Natural killer cell (primary cell): ENCODE measurements at regions of chr12 and their contacts with region 1.

Region 1: GRCh38 chr12:85920324-85920947 is 46.3 kb downstream of the NTS start:
- DNase-seq: peak in 1 of 2 donors; percentile 11
- ATAC-seq: peak in 1 of 3 donors; percentile 45
- H3K4me3 ChIP-seq: no peak overlapping the region
- H3K4me3 Mint-ChIP-seq: no peak overlapping the region
- H3K27ac ChIP-seq: no peak overlapping the region
- H3K27ac Mint-ChIP-seq: no peak overlapping the region
- H3K4me1 ChIP-seq: no peaks in the 10 kb centered on the region
- H3K4me1 Mint-ChIP-seq: no peaks in the 10 kb centered on the region
- H3K27me3 ChIP-seq: no peaks in the 10 kb centered on the region
- H3K27me3 Mint-ChIP-seq: no peaks in the 10 kb centered on the region
- CTCF ChIP-seq: peak; percentile 68

Region 2: DNA sequence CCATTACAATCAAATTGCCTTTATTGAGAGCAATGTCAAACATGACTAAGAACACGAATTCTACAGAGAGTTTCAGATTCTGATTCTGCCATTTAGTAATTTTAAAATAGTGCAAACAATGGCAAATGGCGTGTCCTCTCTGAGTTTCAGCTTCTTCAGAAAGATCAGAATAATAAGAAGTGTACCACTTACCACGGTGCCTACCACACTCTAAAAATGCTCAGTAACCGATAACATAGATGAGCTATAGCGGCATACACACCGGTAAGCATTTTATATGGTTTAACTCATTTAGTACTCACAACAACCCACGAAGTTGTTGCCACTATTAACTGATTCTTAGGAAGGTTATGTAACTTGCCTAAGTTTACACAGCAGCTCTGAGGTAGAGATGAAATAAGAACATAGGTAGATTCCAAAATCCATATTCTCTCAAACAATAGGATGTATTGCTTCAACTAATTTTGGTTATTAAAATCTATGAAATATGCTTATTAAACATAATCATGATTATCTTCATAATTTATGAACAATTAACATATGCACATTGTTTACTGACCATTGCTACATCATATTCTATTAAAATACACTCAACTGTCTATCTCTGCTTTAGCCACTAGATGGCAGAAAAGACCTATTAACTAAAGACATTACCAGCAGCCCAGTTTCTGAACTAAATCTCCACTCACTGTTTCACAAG is 1046.2 kb before region 1 on chr12:
- intact Hi-C with region 1: loop called (anchors 5 kb)
- DNase-seq: peak in 1 of 2 donors; percentile 51
- ATAC-seq: peak; percentile 46 to 64 (median 53)
- H3K4me3 ChIP-seq: no peak overlapping the region
- H3K4me3 Mint-ChIP-seq: no peak overlapping the region
- H3K27ac ChIP-seq: no peak overlapping the region
- H3K27ac Mint-ChIP-seq: no peak overlapping the region
- H3K4me1 ChIP-seq: no peaks in the 10 kb centered on the region
- H3K4me1 Mint-ChIP-seq: no peaks in the 10 kb centered on the region
- H3K27me3 ChIP-seq: no peaks in the 10 kb centered on the region
- H3K27me3 Mint-ChIP-seq: no peaks in the 10 kb centered on the region
- CTCF ChIP-seq: peak; percentile 72

Region 3: DNA sequence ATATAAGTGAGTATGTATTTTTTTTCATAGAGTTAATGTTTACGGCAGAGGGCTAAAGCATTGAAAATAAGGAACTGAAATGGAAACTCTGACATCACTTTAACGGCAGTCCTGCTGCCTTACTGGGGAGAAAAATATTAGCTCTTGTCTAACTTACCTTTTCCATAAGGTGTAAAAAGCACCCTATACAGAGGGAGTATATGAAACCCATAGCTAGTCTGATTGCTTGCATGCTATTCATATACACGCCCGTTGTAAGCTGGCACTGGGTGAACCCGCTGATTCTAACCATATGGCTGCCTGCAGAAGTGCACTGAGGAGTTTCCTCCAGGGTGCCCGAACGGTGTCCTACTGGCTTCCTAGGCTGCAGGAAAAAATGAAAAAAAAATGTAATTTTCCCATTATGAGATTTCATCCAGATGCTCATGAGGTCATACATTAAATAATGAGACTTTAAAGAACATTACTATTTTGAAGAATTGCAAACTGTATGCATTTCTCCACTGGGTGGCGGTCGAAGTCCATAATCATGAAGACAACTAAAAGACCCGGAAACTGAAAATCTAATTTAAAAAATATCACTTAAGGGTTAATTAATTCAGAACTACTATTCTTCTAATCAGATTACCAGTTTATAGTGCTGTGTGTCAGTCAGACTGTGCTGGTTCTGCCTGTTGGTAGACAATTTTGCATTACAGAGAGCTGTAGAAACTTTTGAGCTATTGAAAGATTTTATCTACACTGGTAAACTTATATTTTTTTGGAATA is 495.7 kb before region 1 on chr12:
- intact Hi-C with region 1: loop called (anchors 1 kb)
- DNase-seq: peak in 1 of 2 donors; percentile 4
- ATAC-seq: no peak
- H3K4me3 ChIP-seq: no peak overlapping the region
- H3K4me3 Mint-ChIP-seq: no peak overlapping the region
- H3K27ac ChIP-seq: no peak overlapping the region
- H3K27ac Mint-ChIP-seq: no peak overlapping the region
- H3K4me1 ChIP-seq: no peaks in the 10 kb centered on the region
- H3K4me1 Mint-ChIP-seq: no peaks in the 10 kb centered on the region
- H3K27me3 ChIP-seq: no peaks in the 10 kb centered on the region
- H3K27me3 Mint-ChIP-seq: peaks cover 13 to 18% of the 10 kb centered on the region in 2 donors
- CTCF ChIP-seq: peak; percentile 62

Region 4: DNA sequence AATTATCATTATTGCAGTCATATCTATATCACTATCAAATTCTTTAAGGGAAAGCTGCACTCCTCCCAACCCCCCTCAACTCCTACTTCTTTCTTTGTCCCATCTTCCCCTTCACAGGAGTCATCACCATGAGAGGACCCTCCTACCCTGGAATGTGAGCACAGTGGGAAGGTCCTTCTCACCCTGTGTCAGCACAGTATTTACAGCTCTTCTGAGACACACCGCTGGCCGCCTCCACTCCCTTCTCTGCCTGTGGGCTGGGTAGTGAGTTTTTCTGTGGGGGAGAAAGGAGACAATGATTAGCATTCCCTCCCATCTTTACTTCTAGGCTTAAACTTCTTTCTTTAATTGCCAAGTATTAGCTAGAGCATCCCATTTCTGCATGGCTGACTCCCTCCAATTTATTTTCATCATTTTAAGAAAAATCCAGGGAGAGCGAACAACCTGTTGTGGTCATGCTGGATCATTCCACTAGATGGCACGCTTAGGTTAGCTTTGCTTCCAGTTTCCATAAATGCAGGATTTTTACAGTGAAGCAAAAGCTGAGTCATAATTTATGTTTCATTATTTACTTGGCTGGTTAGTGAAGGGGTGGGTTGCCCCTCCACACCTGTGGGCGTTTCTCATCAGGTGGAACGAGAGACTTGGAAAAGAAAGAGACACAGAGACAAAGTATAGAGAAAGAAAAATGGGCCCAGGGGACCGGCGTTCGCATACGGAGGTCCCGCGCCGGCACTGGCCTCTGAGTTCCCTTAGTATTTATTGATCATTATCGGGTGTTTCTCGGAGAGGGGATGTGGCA is 451.9 kb before region 1 on chr12:
- intact Hi-C with region 1: loop called (anchors 2 kb)
- DNase-seq: peak in 1 of 2 donors; percentile 35
- ATAC-seq: peak; percentile 72 to 90 (median 87)
- H3K4me3 ChIP-seq: peak overlapping the region; percentile 31
- H3K4me3 Mint-ChIP-seq: peak overlapping the region; percentile 95
- H3K27ac ChIP-seq: peak overlapping the region; percentile 35
- H3K27ac Mint-ChIP-seq: peak overlapping the region; percentile 83 to 91
- H3K4me1 ChIP-seq: peaks cover 8% of the 10 kb centered on the region
- H3K4me1 Mint-ChIP-seq: peaks cover 39 to 44% of the 10 kb centered on the region in 2 donors
- H3K27me3 ChIP-seq: no peaks in the 10 kb centered on the region
- H3K27me3 Mint-ChIP-seq: no peaks in the 10 kb centered on the region
- CTCF ChIP-seq: peak; percentile 69